Activated naive CD4-positive, alpha-beta T cell treated with anti-CD3 and anti-CD28 coated beads for 36 hours (primary cell): ENCODE measurements at regions of chr13 and their contacts with region 1.

Region 1: DNA sequence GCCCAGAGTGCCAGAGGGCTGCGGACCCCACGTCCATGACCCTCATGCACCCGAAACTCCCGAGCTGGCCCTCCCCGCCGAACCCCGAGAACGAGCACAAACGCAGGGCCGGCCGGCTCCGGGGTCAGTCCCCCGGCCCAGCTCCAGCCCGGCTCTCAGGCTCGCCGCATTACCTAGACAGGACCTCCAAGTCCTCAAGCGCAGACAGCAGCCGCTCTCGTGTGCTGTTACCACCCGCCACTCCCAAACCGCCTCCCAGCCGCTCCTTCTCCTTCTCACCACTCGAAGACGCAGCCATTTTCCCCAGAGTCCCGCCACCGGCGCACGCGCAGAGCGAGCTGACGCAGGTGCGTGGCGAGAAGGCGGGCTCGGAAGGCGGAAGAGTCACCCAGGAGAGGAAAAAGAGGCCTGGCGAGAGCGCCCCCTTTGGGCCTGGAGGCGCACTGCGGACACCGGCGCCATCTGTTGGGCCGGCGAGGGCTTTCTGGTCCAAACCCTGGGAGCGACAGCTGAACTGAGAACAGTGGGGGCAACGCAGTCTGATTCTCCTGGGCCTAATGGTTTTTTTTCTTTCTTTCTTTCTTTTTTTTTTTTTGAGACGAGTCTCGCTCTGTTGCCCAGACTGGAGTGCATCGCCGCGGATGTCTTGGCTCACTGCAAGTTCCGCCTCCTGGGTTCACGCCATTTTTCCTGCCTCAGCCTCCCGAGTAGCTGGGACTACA is at the start of gene MED4:
- DNase-seq: peak; percentile 97
- H3K4me3 Mint-ChIP-seq: peak within 1 kb of the TSS; percentile 91
- H3K27ac Mint-ChIP-seq: peak within 1 kb of the TSS; percentile 80
- H3K4me1 Mint-ChIP-seq: peaks cover 33% of the 10 kb centered on the region
- H3K27me3 Mint-ChIP-seq: no peaks in the 10 kb centered on the region
- total RNA-seq, gene MED4: 45.8 to 50.1 TPM

Region 2: GRCh38 chr13:47794963-47795362 is 300.0 kb before region 1 on chr13:
- CTCF ChIA-PET with region 1: no interaction called
- intact Hi-C with region 1: loop called (anchors 10 kb)
- DNase-seq: no peak
- H3K4me3 Mint-ChIP-seq: no peak overlapping the region
- H3K27ac Mint-ChIP-seq: no peak overlapping the region
- H3K4me1 Mint-ChIP-seq: no peaks in the 10 kb centered on the region
- H3K27me3 Mint-ChIP-seq: no peaks in the 10 kb centered on the region

Region 3: DNA sequence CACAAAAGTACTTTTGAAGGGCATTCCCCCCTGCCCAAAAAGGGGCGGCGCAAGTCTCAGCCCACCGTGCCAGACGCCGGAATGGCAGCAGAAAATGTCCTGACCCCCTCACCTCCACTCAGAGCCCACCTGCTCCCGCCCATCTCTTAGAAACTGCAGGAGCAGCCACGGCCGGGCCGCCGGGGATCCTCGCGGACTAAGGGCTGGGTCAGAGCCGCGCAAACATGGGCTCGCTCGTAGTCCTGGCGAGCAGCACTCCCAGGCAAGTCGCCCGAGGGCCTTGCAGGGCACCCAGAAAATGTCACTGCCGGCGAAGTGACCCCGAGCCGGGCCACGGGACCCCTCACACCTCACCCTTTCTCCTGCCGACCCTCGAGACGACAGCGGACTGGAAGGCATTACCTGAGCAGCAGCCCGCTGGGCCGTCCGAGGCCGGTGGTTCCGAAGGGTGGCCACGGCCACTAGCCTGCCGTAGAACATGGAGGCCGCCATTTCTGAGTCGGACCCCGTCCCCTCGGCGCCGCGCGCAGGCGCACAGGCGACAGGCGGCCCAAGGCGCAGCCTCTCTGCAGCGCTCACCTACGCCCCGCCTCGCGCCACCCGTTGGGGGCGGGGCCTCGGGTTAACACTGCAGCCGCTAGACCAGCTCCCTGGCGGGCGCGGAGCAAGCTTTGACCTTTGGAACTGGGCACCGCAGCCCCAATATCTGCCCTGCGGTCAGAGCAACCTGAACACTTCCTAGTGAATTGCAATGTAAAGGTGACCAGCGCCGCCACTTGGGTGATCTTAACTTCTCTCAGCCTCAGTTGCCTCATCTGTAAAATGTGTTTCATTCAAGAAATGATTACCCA is 93.9 kb before region 1 on chr13 and contains the start of gene SUCLA2:
- CTCF ChIA-PET with region 1: no interaction called
- intact Hi-C with region 1: loop called (anchors 1 kb)
- DNase-seq: peak; percentile 92
- H3K4me3 Mint-ChIP-seq: peak within 1 kb of the TSS; percentile 94
- H3K27ac Mint-ChIP-seq: peak within 1 kb of the TSS; percentile 81
- H3K4me1 Mint-ChIP-seq: peaks cover 31% of the 10 kb centered on the region
- H3K27me3 Mint-ChIP-seq: no peaks in the 10 kb centered on the region
- total RNA-seq, gene SUCLA2: 44.0 to 44.4 TPM

Region 4: DNA sequence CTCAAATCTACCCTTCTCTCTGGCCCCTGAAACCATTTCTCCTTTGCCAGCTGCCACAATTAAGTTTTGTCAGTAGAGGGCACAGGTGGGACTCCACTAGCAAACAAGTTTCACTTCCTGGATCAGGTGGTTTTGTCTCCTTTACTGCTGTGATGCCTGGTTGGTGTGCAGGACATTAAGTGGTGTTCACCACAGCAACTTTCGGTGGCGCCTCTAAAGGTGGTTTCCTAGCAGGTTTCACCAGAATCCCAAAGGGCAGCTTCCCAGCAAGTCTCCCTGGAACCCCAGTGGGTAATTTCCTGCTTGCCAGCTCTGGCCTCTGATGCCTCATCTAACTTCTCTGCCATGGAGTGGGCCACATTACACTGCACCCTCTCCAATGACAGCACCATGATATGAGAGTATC is 16.7 kb before region 1 on chr13:
- CTCF ChIA-PET with region 1: interaction called, 11 read pairs
- intact Hi-C with region 1: loop called (anchors 1 kb)
- DNase-seq: peak; percentile 44
- H3K4me3 Mint-ChIP-seq: no peak overlapping the region
- H3K27ac Mint-ChIP-seq: no peak overlapping the region
- H3K4me1 Mint-ChIP-seq: peaks cover 4% of the 10 kb centered on the region
- H3K27me3 Mint-ChIP-seq: no peaks in the 10 kb centered on the region

Region 5: DNA sequence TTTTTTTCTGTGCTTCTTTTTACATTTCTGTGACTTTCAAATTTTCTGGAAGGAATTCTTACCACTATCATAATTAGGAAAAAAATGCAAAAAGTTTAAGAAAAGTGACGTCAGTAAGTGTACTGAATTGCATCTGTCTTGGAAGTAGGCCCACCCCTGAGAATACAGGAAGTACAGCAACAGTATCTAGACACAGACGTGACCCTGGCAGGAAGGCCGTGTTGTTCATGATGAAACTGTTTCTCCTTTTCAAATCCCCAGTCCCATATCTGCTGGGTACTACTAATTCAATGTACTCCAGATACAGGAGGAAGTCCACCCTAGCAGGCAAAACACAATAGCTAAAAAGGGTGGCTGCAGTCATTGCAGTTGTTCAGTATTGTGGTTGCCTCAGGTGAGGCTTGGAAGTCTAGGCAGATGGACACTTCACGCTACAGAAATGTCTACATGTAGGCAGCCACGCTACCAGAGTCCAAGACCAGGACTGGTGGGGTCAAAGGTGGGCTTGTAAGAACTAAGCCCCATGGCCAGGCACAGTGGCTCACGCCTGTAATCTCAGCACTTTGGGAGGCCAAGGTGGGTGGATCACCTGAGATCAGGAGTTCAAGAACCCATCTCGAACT is 49.6 kb after region 1 on chr13:
- CTCF ChIA-PET with region 1: interaction called, 10 read pairs
- intact Hi-C with region 1: no loop called
- DNase-seq: peak; percentile 52
- H3K4me3 Mint-ChIP-seq: no peak overlapping the region
- H3K27ac Mint-ChIP-seq: peak overlapping the region; percentile 80
- H3K4me1 Mint-ChIP-seq: peaks cover 40% of the 10 kb centered on the region
- H3K27me3 Mint-ChIP-seq: no peaks in the 10 kb centered on the region